ENCODE measurements at regions of chr1 and their contacts with region 1.

Region 1: GRCh38 chr1:89454845-89455521 is 69.6 kb upstream of the LRRC8B start:
- DNase-seq: peak; percentile 47
- H3K4me3 Mint-ChIP-seq: no peak overlapping the region
- H3K27ac Mint-ChIP-seq: no peak overlapping the region
- H3K4me1 Mint-ChIP-seq: peaks cover 20% of the 10 kb centered on the region
- H3K27me3 Mint-ChIP-seq: peaks cover 44% of the 10 kb centered on the region

Region 2: GRCh38 chr1:88998716-88999115 is 456.3 kb before region 1 on chr1:
- intact Hi-C with region 1: loop called (anchors 1 kb)
- DNase-seq: no peak
- H3K4me3 Mint-ChIP-seq: no peak overlapping the region
- H3K27ac Mint-ChIP-seq: no peak overlapping the region
- H3K4me1 Mint-ChIP-seq: peaks cover 13% of the 10 kb centered on the region
- H3K27me3 Mint-ChIP-seq: peaks cover 4% of the 10 kb centered on the region

Region 3: DNA sequence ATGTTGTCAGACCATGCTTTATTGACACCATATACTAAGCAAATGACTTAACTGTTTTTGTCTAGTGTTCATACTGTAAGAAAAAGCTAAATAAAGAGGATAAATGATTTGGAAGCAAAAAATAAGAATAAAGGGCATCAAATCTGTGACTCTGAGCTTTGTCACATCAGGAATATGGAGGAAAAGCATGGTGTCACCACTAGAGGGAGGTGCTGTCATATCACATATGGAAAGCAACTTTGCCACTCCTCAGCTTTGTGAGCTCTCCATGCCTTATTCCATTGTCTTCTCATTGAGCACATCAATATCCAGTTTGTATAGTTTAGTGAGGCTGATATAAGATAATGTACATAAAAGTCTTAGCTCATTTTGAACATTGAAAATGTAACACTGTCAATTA is 369.2 kb before region 1 on chr1:
- intact Hi-C with region 1: loop called (anchors 1 kb)
- DNase-seq: peak; percentile 51
- H3K4me3 Mint-ChIP-seq: no peak overlapping the region
- H3K27ac Mint-ChIP-seq: no peak overlapping the region
- H3K4me1 Mint-ChIP-seq: peaks cover 14% of the 10 kb centered on the region
- H3K27me3 Mint-ChIP-seq: peaks cover 8% of the 10 kb centered on the region

Region 4: DNA sequence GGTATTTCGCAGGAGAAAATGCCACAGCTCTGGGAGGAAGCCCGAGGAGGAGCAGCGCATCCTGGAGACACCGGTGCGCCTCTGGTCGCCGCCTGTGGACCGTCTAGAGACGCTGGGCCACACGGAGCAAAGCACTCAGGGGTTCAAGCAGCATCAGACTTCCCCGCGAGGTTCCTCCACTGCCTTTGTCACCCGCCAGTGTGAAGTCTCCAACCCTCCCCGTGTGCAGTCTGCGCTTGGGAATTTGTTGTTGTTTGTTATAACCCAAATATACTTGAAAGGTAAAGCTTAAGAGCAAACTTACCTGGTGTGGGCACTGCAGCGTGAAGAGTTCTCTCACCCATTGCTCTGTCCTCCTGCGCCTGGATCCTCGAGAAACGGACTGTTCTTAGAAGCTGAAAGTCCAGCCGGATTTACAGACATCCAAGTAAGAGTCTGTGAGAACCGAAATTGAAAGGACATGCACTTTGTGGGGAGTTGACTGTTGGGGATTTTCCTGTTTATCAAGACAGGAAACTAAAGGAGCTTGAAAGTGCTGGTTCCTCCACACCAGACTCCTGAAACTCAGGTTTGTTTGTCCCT is 256.4 kb before region 1 on chr1 and contains the start of gene GBP4:
- intact Hi-C with region 1: loop called (anchors 5 kb)
- DNase-seq: peak; percentile 30
- H3K4me3 Mint-ChIP-seq: peak within 1 kb of the TSS; percentile 86
- H3K27ac Mint-ChIP-seq: peak within 1 kb of the TSS; percentile 93
- H3K4me1 Mint-ChIP-seq: peaks cover 79% of the 10 kb centered on the region
- H3K27me3 Mint-ChIP-seq: no peaks in the 10 kb centered on the region
- total RNA-seq, gene GBP4: 13.9 and 14.3 TPM in 2 replicates

Region 5: DNA sequence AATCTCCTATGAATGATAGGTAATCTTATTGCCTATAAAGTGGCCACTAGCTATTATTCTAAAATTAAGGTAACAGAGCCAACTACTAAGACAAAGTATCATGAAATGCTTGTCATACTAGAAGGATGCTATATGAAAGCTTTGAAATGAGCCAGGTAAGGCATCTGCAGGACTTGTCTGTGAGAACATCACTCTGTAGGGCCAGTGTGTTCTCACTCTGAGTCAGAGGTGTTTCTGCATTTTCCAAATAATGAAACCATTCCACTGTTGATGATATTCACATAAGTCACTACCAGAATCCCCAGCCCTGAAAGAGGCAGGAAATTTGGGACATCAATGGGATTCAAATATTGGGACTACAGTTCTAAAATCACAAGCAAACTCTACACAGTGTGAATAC is 156.5 kb before region 1 on chr1:
- intact Hi-C with region 1: loop called (anchors 5 kb)
- DNase-seq: no peak
- H3K4me3 Mint-ChIP-seq: no peak overlapping the region
- H3K27ac Mint-ChIP-seq: no peak overlapping the region
- H3K4me1 Mint-ChIP-seq: peaks cover 59% of the 10 kb centered on the region
- H3K27me3 Mint-ChIP-seq: peaks cover 1% of the 10 kb centered on the region

Region 6: GRCh38 chr1:89381618-89382017 is 73.4 kb before region 1 on chr1:
- intact Hi-C with region 1: loop called (anchors 5 kb)
- DNase-seq: no peak
- H3K4me3 Mint-ChIP-seq: no peak overlapping the region
- H3K27ac Mint-ChIP-seq: no peak overlapping the region
- H3K4me1 Mint-ChIP-seq: peaks cover 10% of the 10 kb centered on the region
- H3K27me3 Mint-ChIP-seq: no peaks in the 10 kb centered on the region